ENCODE measurements at regions of chr12 and their contacts with region 1.

Region 1: GRCh38 chr12:51678086-51678724 is 87.2 kb downstream of the SCN8A start:
- DNase-seq: no peak
- H3K4me3 ChIP-seq: no peak overlapping the region
- H3K27ac ChIP-seq: no peak overlapping the region
- H3K4me1 ChIP-seq: peaks cover 0 to 6% (median 2%) of the 10 kb centered on the region in 4 experiments; a peak in 1 of 7 replicates
- H3K27me3 ChIP-seq: peaks cover 0 to 1% (median 0%) of the 10 kb centered on the region in 4 experiments; a peak in 2 of 7 replicates
- CTCF ChIP-seq: peak; percentile 67 to 84 (median 67)
- EP300 ChIP-seq: no peak
- POLR2A ChIP-seq: no peak
- RAD21 ChIP-seq: peak; percentile 74 to 78

Region 2: DNA sequence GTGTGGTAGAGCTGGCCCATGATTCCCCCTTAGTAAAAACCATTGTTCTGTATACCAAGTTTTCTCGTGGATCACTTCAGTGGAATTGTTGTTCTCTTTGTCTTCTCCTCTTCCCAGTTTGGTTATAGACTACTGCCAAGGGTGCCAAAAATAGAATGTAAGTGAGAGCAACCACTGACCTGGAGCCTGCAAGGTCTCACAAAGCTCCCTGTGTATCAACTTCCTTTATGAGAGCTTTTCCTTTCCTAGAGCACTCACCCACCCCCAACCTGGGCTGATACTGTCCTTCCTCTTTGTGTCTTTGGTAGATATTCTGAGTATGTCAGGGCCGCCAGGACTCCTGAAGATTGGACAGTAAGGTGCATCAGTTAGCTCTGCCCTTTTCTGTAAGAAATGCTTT is 13.8 kb after region 1 on chr12:
- CTCF ChIA-PET with region 1: interaction called, 21 read pairs
- POLR2A ChIA-PET with region 1: no interaction called
- DNase-seq: no peak
- H3K4me3 ChIP-seq: no peak overlapping the region
- H3K27ac ChIP-seq: no peak overlapping the region
- H3K4me1 ChIP-seq: peaks cover 0 to 5% (median 0%) of the 10 kb centered on the region in 4 experiments; a peak in 1 of 7 replicates
- H3K27me3 ChIP-seq: no peaks in the 10 kb centered on the region
- CTCF ChIP-seq: no peak
- EP300 ChIP-seq: no peak
- POLR2A ChIP-seq: no peak
- RAD21 ChIP-seq: no peak

Region 3: DNA sequence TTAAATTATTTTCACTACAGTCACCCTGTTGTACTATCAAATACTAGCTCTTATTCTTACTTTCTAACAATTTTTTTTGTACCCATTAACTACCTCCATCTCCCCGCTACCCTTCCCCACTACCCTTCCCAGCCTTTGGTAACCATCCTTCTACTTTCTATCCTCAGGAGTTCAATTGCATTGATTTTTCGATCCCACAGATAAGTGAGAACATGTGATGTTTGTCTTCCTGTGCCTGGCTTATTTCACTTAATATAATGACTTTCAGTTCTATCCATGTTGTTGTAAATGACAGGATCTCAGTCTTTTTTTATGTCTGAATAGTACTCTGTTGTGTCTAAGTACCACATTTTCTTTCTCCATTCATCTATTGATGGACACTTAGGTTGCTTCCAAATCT is 52.5 kb after region 1 on chr12:
- CTCF ChIA-PET with region 1: no interaction called
- POLR2A ChIA-PET with region 1: no interaction called
- DNase-seq: no peak
- H3K4me3 ChIP-seq: no peak overlapping the region
- H3K27ac ChIP-seq: no peak overlapping the region
- H3K4me1 ChIP-seq: no peaks in the 10 kb centered on the region
- H3K27me3 ChIP-seq: no peaks in the 10 kb centered on the region
- CTCF ChIP-seq: no peak
- EP300 ChIP-seq: no peak
- POLR2A ChIP-seq: no peak
- RAD21 ChIP-seq: no peak